Sigmoid colon (tissue), 7 donors: ENCODE measurements at regions of chr2 and their contacts with region 1.

Region 1: GRCh38 chr2:219642465-219643080 is 15.1 kb downstream of the SLC4A3 start:
- DNase-seq: peak; percentile 99
- H3K4me3 ChIP-seq: no peak overlapping the region
- H3K27ac ChIP-seq: peak overlapping the region in 1 of 4 donors; percentile 30
- H3K4me1 ChIP-seq: peaks cover 0 to 25% (median 17%) of the 10 kb centered on the region in 4 donors
- H3K27me3 ChIP-seq: no peaks in the 10 kb centered on the region
- CTCF ChIP-seq: peak; percentile 99 to 100 (median 100)
- EP300 ChIP-seq: no peak
- POLR2A ChIP-seq: no peak

Region 2: GRCh38 chr2:219571311-219572236 is 71.0 kb before region 1 on chr2 and contains the start of gene OBSL1:
- intact Hi-C with region 1: loop called (anchors 2 kb)
- DNase-seq: peak; percentile 83
- H3K4me3 ChIP-seq: peak within 1 kb of the TSS; percentile 66 to 69 (median 68)
- H3K27ac ChIP-seq: peak within 1 kb of the TSS; percentile 86 to 91 (median 88)
- H3K4me1 ChIP-seq: peaks cover 0 to 15% (median 13%) of the 10 kb centered on the region in 4 donors
- H3K27me3 ChIP-seq: peaks cover 0 to 17% (median 0%) of the 10 kb centered on the region in 3 donors
- CTCF ChIP-seq: no peak
- EP300 ChIP-seq: no peak
- POLR2A ChIP-seq: no peak
- total RNA-seq, gene OBSL1: 34.6 to 83.6 (median 53.3) TPM

Region 3: GRCh38 chr2:219689676-219690628 is 47.4 kb after region 1 on chr2:
- intact Hi-C with region 1: loop called (anchors 5 kb)
- DNase-seq: no peak
- H3K4me3 ChIP-seq: no peak overlapping the region
- H3K27ac ChIP-seq: peak overlapping the region in 2 of 4 donors; percentile 51 to 66
- H3K4me1 ChIP-seq: peaks cover 0 to 17% (median 3%) of the 10 kb centered on the region in 4 donors
- H3K27me3 ChIP-seq: no peaks in the 10 kb centered on the region
- CTCF ChIP-seq: peak; percentile 47 to 73 (median 60)
- EP300 ChIP-seq: no peak
- POLR2A ChIP-seq: no peak

Region 4: GRCh38 chr2:219726916-219727315 is 84.3 kb after region 1 on chr2:
- intact Hi-C with region 1: no loop called
- DNase-seq: no peak
- H3K4me3 ChIP-seq: no peak overlapping the region
- H3K27ac ChIP-seq: no peak overlapping the region
- H3K4me1 ChIP-seq: no peaks in the 10 kb centered on the region
- H3K27me3 ChIP-seq: no peaks in the 10 kb centered on the region
- CTCF ChIP-seq: no peak
- EP300 ChIP-seq: no peak
- POLR2A ChIP-seq: no peak